AG04449 (cell line): ENCODE measurements at regions of chr12 and their contacts with region 1.

Region 1: DNA sequence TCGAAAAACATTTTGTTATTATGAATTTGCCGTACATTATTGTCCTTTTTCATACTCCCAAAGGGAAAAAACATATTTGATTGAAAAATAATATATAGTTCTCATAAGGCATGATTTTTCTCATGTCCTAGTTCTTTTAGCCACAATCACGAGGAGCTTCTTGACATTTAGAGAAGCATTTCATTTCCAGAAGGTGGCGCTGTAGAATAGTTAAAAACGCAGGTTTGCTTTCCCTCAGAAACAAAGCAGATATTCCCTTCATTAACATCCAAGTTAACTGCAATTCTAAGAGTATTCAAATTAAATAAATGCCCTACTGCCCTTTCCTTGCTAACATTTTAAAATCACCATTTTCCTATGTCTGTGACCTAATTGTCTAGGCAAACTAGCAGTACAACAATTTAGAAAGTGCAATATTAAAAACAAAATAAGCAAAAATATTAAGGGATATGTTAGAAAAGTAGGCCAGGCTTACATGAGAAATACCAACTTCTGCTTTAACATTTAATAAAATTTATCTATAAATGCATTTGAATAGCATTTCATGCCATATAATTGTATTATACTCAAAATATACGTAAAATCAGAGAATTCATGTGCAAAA is 10.9 kb upstream of the PIK3C2G start:
- DNase-seq: peak; percentile 23
- H3K4me3 ChIP-seq: no peak overlapping the region
- CTCF ChIP-seq: peak; percentile 43

Region 2: GRCh38 chr12:18261253-18261652 is 10.8 kb after region 1 on chr12 and contains the start of gene PIK3C2G:
- CTCF ChIA-PET with region 1: interaction called, 16 read pairs
- POLR2A ChIA-PET with region 1: no interaction called
- DNase-seq: no peak
- H3K4me3 ChIP-seq: no peak within 1 kb of the TSS
- CTCF ChIP-seq: no peak

Region 3: DNA sequence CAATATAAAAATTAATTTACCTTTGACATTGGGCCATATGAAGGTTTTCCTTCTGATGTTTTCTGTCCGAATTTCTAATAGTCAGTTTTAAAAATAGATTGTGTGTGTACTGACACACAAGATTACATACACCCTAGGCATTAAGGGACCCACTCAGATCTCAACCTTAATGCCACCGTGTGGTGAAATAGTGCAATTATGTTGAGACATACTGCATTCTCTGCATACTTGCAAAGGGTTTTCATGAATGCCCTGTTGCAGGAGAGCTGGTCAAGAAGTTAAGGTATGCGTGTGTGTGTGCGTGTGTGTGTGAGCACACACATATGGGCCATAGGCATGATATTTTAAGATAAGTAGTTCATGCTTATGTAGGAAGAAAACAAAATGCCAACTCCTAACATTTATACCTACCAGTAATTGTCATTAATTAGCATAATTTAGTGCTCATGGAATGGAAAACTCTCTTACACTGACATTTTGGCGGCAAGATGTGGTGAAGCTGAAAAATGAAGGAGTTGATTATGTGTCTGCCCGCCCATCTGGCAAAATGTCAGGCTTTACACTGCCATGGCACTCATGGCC is 69.7 kb after region 1 on chr12:
- CTCF ChIA-PET with region 1: interaction called, 16 read pairs
- POLR2A ChIA-PET with region 1: no interaction called
- DNase-seq: peak; percentile 59
- H3K4me3 ChIP-seq: no peak overlapping the region
- CTCF ChIP-seq: peak; percentile 31